Activated CD4-positive, alpha-beta memory T cell treated with anti-CD3 and anti-CD28 coated beads, Interleukin-2, amount 10 ng/mL, durations not matched to agents 7 days and 5 days (primary cell): ENCODE measurements at regions of chr12 and their contacts with region 1.

Region 1: GRCh38 chr12:92408072-92408900 is 262.6 kb upstream of the BTG1 start:
- DNase-seq: peak; percentile 69
- H3K4me3 Mint-ChIP-seq: no peak overlapping the region
- H3K27ac Mint-ChIP-seq: peak overlapping the region; percentile 9
- H3K4me1 Mint-ChIP-seq: peaks cover 40% of the 10 kb centered on the region
- H3K27me3 Mint-ChIP-seq: no peaks in the 10 kb centered on the region

Region 2: GRCh38 chr12:92363295-92364146 is 44.8 kb before region 1 on chr12:
- CTCF ChIA-PET with region 1: interaction called, 6 read pairs
- POLR2A ChIA-PET with region 1: interaction called, 20 read pairs
- DNase-seq: peak; percentile 40
- H3K4me3 Mint-ChIP-seq: peak overlapping the region; percentile 51
- H3K27ac Mint-ChIP-seq: peak overlapping the region; percentile 70
- H3K4me1 Mint-ChIP-seq: peaks cover 47% of the 10 kb centered on the region
- H3K27me3 Mint-ChIP-seq: no peaks in the 10 kb centered on the region

Region 3: GRCh38 chr12:92431146-92431545 is 22.9 kb after region 1 on chr12:
- CTCF ChIA-PET with region 1: no interaction called
- POLR2A ChIA-PET with region 1: no interaction called
- DNase-seq: peak; percentile 18
- H3K4me3 Mint-ChIP-seq: no peak overlapping the region
- H3K27ac Mint-ChIP-seq: no peak overlapping the region
- H3K4me1 Mint-ChIP-seq: peaks cover 13% of the 10 kb centered on the region
- H3K27me3 Mint-ChIP-seq: no peaks in the 10 kb centered on the region

Region 4: DNA sequence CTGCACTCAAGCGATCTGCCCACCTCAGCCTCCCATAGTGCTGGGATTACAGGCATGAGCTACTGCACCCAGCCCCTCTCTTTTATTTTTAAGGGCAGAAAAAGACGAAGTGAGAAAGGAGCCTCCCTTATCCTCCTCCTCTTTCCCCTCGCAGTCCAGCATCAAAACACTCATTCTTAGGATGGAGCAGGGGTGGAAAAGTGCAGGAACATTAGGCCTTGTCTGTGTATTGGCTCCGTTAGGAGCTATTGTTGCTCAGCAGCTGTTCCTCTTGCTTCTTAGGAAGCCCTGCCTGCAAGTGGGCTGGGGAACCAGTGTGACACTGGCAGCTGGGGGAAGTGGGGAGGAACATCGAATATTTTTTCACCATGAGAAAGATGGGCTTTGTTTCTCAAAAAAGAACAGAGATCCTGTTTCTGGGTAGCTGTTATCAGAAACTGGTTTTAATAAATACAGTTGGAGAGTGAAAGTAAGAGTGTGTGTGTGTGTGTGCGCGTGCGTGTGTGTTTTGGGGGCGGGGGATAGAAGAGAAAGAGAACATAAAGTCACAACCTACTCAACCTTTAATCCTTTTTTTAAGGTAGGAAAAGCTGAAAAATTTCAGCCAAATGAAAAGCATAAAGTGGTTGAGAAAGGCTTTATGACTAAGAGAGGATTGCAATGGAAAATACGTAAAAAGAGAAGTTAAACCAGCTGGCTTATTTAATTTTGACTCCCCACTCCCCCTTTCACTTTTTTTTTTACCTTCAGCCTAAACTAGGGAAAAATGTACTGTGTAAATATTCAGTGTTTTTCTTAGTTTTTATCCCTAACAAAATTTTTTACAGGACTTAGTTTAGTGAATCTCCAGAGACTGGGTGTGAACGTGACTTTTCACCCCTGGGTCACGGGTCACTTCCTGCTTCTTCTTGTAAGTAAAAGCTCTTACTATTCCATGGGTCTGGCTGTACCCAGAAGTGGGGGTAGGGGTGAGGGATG is 97.3 kb after region 1 on chr12:
- CTCF ChIA-PET with region 1: interaction called, 7 read pairs
- POLR2A ChIA-PET with region 1: interaction called, 34 read pairs
- DNase-seq: peak; percentile 59
- H3K4me3 Mint-ChIP-seq: peak overlapping the region; percentile 74
- H3K27ac Mint-ChIP-seq: peak overlapping the region; percentile 91
- H3K4me1 Mint-ChIP-seq: peaks cover 46% of the 10 kb centered on the region
- H3K27me3 Mint-ChIP-seq: no peaks in the 10 kb centered on the region

Region 5: DNA sequence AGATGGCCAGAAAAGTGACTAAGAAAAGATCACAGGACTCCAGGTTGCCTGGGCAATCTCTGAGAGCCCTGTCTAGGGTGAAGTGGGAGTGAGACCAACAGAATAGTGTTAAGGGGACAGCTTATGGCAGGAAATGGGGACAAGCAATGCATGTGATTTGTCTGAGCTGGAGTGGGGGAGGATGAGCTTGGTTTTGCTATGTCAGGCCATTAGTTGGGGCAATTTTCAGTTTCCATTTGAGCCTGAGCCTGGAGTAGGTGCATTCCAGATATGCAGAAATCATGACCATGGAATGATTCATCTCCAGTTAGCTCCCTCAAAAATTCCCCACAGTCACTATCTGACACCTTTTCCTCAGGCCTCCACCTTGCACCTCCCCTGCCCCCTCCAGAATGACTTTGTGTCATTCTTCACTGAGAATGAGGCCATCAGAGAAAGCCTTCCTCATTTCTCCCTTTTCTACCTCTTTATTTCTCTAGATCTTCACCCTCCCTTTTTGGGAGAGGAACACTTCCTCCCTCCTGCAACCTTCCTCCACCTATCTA is 143.6 kb after region 1 on chr12:
- CTCF ChIA-PET with region 1: no interaction called
- POLR2A ChIA-PET with region 1: interaction called, 16 read pairs
- DNase-seq: no peak
- H3K4me3 Mint-ChIP-seq: no peak overlapping the region
- H3K27ac Mint-ChIP-seq: no peak overlapping the region
- H3K4me1 Mint-ChIP-seq: peaks cover 26% of the 10 kb centered on the region
- H3K27me3 Mint-ChIP-seq: no peaks in the 10 kb centered on the region